ENCODE measurements at regions of chr5 and their contacts with region 1.

Region 1: DNA sequence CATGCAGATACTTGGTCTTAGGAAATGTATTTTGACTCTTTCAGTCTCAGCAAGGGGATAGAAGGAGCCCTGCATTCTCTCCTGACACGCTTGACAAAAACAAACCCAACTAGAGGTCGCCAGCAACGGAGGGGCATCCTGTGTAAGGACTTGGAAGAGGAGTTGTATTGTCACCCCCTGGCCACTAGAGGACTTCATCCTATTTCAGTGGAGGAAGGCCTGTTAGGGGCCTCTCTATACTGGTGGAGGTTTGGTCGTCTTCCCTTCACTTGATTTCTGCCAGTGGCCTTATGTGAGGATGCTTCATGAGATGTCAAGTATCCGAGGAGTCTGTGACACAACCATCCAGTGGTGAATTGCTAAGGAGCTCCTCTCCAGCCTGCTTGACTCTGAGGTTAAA is 122.8 kb upstream of the STC2 start:
- DNase-seq: no peak

Region 2: DNA sequence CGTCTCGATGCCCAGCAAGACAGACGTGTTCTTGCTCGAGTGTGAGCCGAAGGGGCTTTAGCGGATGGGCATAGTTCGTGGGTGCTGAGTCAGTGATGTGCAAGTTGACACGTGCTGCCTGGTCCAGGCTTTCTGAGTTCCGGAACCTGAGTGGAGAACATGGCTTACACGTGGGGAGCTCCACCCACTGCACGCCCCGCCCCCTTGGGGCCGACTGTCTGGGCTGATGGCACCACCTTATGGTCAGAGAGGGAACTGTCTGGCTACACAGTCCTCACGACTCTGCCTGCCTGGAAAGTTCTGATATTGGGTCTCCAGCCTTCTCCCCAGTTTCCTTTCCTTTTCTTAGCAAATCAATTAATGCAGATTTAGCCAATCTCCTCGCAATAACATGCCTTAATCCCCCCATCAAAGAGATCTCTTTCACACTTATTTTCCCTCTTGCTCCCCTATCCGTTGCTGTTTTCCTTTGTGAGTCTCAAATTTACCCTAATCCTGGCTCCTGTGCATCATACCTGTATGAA is 119.0 kb before region 1 on chr5:
- intact Hi-C with region 1: loop called (anchors 10 kb)
- DNase-seq: peak; percentile 88

Region 3: DNA sequence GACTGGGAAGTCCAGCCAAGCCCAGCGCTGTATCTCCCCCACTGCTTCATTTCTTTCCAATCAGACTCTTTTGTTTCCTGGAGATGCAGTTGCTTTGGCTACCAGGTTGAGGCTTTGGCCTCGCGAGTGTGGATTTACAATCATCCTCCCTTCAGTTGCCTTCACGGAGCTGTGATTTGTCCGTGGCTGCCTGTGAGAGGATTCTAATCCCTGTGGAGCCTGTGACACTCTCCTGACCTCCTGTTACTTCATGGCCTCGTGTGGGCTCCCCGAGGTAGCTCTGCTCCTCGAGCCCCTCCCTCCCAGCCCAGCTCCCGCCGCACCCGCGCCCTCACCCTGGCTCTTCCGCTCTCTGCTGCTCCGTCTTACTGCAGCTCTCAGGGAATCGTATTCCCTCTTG is 15.6 kb before region 1 on chr5:
- intact Hi-C with region 1: no loop called
- DNase-seq: no peak

Region 4: DNA sequence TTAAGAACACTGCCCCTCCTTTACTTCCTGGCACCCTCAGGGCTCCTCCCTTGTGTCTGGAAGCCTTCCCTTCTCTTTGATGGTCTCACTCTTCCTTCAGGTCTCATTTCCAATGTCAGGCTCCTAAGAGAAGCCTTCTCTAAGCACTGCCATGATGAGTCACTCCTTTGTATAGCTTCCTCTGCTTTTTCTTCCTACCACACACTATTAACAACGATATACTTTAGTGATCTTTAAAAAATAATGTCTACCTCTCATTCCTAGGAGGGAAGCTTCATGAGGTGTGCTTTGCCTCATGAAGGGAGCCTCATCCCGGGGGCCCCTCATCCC is 85.2 kb after region 1 on chr5:
- intact Hi-C with region 1: loop called (anchors 2 kb)
- DNase-seq: no peak

Region 5: DNA sequence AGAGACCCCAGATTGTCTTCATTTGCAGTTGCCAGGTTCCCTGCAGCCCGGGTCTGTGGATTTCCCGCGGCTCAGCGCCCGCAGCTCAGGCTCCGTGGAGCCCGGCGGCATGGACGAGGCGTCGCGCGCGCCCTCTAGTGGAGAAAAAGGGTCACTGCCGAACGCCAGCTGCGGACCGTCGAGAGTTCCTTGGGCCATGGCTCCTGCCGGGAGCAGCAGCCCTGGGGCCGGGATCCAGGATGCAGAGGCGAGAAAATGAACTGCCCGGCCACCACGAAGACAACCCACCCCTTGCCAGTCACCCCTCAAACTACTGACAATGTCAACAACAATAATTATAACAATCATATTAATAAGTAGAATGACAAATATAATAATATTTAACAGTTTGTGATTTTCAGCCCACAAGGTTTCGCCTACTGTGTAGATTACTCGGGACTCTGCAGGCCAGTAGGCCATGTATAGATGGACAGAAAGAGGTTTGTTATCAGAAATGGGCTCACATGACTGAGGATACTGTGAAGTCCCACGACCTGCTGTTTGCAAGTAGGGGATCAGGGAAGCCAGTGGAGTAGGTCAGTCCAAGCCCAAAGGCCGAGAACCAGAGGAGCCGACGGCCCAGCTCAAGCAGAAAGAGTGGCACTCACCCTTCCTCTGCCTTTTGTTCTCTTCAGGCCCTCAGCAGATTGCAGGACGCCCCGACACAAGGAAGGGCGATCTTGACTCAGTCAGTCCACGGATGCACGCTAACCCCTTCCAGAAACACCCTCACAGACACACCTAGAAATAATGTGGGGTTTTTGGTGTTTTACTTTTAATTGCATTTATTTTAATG is 122.3 kb after region 1 on chr5:
- intact Hi-C with region 1: loop called (anchors 10 kb)
- DNase-seq: peak; percentile 93

Region 6: DNA sequence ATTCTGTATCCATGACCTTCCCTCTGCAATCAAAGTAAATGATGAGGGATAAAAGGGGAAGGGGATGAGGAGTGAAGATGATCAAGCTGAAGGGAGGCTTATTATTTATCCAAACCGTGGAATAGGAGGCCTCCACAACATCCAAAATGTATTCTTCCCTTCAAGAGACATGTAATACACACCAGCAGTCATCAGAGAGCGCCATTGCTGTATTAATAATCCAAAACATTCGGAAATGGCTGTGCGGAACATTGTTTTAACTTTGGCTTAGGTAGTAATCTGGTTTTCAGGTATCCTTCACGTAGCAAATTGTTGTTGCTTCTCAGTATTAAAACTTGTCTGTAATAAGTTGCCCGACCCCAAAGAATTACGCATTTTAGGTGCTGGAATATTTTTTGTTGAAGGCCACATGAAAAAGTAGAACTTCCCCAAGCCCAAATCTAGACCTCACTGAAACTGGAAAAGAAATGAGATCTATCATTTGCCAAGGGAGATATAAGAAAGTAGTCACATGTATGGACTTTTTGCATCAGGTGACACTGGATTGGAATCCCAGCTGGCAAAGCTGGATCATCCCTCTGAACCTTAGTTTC is 168.0 kb after region 1 on chr5:
- intact Hi-C with region 1: no loop called
- DNase-seq: no peak

Measured in cardiac septum (tissue), 1 donor.